K562 (cell line): ENCODE measurements at regions of chr11 and their contacts with region 1.

Region 1: DNA sequence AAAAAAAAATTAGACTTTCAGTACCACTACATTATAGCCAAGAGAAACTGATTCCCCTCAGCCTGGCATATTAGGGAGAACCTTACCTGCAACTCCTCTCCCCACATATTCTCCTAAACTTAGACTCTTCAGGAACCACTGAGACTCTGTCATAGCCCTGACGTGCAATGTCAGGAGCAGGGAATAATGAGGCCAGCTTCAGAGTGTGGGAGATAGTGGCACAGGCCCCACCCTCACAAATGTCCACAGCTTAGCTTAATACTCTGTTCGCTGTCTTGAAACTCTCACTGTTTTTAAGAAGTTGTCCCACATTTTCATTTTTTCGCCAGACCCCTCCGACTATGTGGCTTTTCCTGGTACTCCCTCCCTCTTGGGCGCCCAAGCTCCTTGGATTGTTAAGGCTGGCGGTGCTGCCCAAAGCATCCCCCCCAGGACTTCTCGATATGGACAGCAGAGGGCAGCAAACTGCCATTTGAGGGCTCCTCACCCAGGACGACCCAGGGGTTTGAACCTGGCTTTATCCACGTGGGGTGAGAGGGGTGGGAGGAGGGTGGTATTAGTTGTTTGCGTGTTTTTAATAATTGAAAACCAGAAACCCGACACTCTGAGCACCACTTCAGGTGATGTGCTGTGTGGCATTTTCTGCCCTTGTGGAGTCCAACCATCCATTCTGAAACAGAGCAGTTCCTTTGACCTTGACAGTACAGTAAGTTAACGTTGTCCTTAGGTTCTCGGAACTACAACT is 45.2 kb upstream of the RASSF10 start:
- DNase-seq: peak; percentile 75 to 89 (median 85)
- ATAC-seq: peak; percentile 94
- H3K4me3 ChIP-seq: no peak overlapping the region
- H3K27ac ChIP-seq: no peak overlapping the region
- H3K4me1 ChIP-seq: peaks cover 0 to 4% of the 10 kb centered on the region in 2 experiments; a peak in 1 of 5 replicates
- H3K27me3 ChIP-seq: no peaks in the 10 kb centered on the region
- CTCF ChIP-seq: peak; percentile 81 to 88 (median 81)
- EP300 ChIP-seq: no peak
- POLR2A ChIP-seq: no peak
- RAD21 ChIP-seq: peak; percentile 90

Region 2: GRCh38 chr11:13114566-13115379 is 150.8 kb after region 1 on chr11:
- CTCF ChIA-PET with region 1: interaction called, 5 read pairs
- POLR2A ChIA-PET with region 1: interaction called, 3 read pairs
- in situ Hi-C with region 1: no loop called
- intact Hi-C with region 1: loop called (anchors 2 kb)
- DNase-seq: peak; percentile 67 to 86 (median 78)
- ATAC-seq: peak; percentile 99
- H3K4me3 ChIP-seq: no peak overlapping the region
- H3K27ac ChIP-seq: no peak overlapping the region
- H3K4me1 ChIP-seq: peaks cover 11 to 17% of the 10 kb centered on the region in 2 experiments
- H3K27me3 ChIP-seq: peaks cover 0 to 6% of the 10 kb centered on the region in 2 experiments; a peak in 1 of 5 replicates
- CTCF ChIP-seq: peak; percentile 74 to 82 (median 76)
- EP300 ChIP-seq: no peak
- POLR2A ChIP-seq: no peak
- RAD21 ChIP-seq: peak; percentile 83 to 91

Region 3: DNA sequence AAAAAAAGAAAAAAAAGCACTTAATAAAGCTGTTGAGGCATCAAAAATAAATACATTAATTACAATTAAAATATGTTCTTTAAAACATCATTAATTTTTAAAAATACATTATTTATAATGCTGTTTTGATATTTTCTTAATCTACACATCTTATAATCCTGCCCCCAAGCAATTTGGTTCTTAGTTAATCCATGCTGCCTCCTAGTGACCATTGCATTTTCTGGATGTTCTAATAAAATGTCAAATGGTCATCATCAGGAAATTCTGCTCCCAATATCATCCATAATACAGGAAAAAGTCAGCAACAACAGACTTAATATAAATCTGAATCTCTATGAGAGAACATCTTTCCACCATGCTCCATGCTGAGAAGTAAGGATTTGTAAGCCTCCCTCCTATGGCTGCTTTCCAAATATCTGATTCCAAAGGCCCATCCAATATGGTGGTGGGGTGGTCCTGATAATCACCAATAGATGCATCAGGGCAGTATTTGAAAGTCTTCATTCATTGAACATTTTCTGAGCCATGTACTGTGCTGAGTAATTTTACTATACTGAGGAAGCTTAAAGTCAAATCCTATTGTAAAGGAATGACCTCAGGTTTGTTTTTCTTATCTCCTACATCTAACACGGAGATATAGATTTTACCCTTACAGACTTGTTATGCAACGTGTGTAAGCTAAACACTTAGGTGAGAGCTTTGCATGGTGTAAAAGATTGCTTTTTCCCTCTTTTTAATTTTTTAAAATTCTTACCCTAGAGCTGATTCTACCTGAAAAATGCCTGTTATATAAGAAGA is 189.0 kb after region 1 on chr11:
- CTCF ChIA-PET with region 1: interaction called, 16 read pairs
- POLR2A ChIA-PET with region 1: no interaction called
- in situ Hi-C with region 1: no loop called
- intact Hi-C with region 1: loop called (anchors 1 kb)
- DNase-seq: peak in 2 of 4 experiments; percentile 33 to 44
- ATAC-seq: 0 out of 3 replicates have a peak, but pooled peaks have one; percentile 37
- H3K4me3 ChIP-seq: no peak overlapping the region
- H3K27ac ChIP-seq: no peak overlapping the region
- H3K4me1 ChIP-seq: no peaks in the 10 kb centered on the region
- H3K27me3 ChIP-seq: no peaks in the 10 kb centered on the region
- CTCF ChIP-seq: peak; percentile 44 to 77 (median 52); a peak in 4 of 6 replicates
- EP300 ChIP-seq: no peak
- POLR2A ChIP-seq: no peak
- RAD21 ChIP-seq: peak; percentile 74 to 84

Region 4: GRCh38 chr11:13183094-13183825 is 219.3 kb after region 1 on chr11:
- CTCF ChIA-PET with region 1: interaction called, 14 read pairs
- POLR2A ChIA-PET with region 1: no interaction called
- in situ Hi-C with region 1: no loop called
- intact Hi-C with region 1: loop called (anchors 1 kb)
- DNase-seq: peak in 2 of 4 experiments; percentile 17 to 31
- ATAC-seq: peak; percentile 73
- H3K4me3 ChIP-seq: no peak overlapping the region
- H3K27ac ChIP-seq: no peak overlapping the region
- H3K4me1 ChIP-seq: no peaks in the 10 kb centered on the region
- H3K27me3 ChIP-seq: no peaks in the 10 kb centered on the region; a peak in 1 of 5 replicates
- CTCF ChIP-seq: peak; percentile 34 to 65 (median 46); a peak in 4 of 6 replicates
- EP300 ChIP-seq: no peak
- POLR2A ChIP-seq: no peak
- RAD21 ChIP-seq: peak; percentile 68 to 69

Region 5: GRCh38 chr11:13335319-13335718 is 371.4 kb after region 1 on chr11:
- CTCF ChIA-PET with region 1: no interaction called
- POLR2A ChIA-PET with region 1: no interaction called
- in situ Hi-C with region 1: loop called (anchors 10 kb)
- intact Hi-C with region 1: loop called (anchors 10 kb)
- DNase-seq: peak; percentile 64 to 69 (median 66)
- ATAC-seq: peak; percentile 82
- H3K4me3 ChIP-seq: no peak overlapping the region
- H3K27ac ChIP-seq: no peak overlapping the region
- H3K4me1 ChIP-seq: peaks cover 0 to 7% of the 10 kb centered on the region in 2 experiments; a peak in 1 of 5 replicates
- H3K27me3 ChIP-seq: peaks cover 8 to 38% of the 10 kb centered on the region in 2 experiments; a peak in 4 of 5 replicates
- CTCF ChIP-seq: peak; percentile 69 to 82 (median 78)
- EP300 ChIP-seq: no peak
- POLR2A ChIP-seq: no peak
- RAD21 ChIP-seq: peak; percentile 60 to 67